HCT116 (cell line): ENCODE measurements at regions of chr4 and their contacts with region 1.

Region 1: GRCh38 chr4:139015269-139015947 is at the start of gene NOCT:
- DNase-seq: peak; percentile 82
- ATAC-seq: peak; percentile 87
- H3K4me3 ChIP-seq: peak within 1 kb of the TSS; percentile 88 to 93
- H3K27ac ChIP-seq: peak within 1 kb of the TSS; percentile 82
- H3K4me1 ChIP-seq: peaks cover 20 to 49% of the 10 kb centered on the region in 2 experiments
- H3K27me3 ChIP-seq: no peaks in the 10 kb centered on the region
- CTCF ChIP-seq: no peak
- POLR2A ChIP-seq: peak; percentile 91
- RAD21 ChIP-seq: no peak
- total RNA-seq, gene NOCT: 20.4 TPM

Region 2: GRCh38 chr4:139223682-139224317 is 208.4 kb after region 1 on chr4:
- CTCF ChIA-PET with region 1: no interaction called
- POLR2A ChIA-PET with region 1: no interaction called
- RAD21 ChIA-PET with region 1: no interaction called
- intact Hi-C with region 1: no loop called
- DNase-seq: no peak
- ATAC-seq: no peak
- H3K4me3 ChIP-seq: no peak overlapping the region
- H3K27ac ChIP-seq: no peak overlapping the region
- H3K4me1 ChIP-seq: peaks cover 0 to 6% of the 10 kb centered on the region in 2 experiments; a peak in 2 of 4 replicates
- H3K27me3 ChIP-seq: no peaks in the 10 kb centered on the region
- CTCF ChIP-seq: no peak
- POLR2A ChIP-seq: no peak
- RAD21 ChIP-seq: no peak

Region 3: DNA sequence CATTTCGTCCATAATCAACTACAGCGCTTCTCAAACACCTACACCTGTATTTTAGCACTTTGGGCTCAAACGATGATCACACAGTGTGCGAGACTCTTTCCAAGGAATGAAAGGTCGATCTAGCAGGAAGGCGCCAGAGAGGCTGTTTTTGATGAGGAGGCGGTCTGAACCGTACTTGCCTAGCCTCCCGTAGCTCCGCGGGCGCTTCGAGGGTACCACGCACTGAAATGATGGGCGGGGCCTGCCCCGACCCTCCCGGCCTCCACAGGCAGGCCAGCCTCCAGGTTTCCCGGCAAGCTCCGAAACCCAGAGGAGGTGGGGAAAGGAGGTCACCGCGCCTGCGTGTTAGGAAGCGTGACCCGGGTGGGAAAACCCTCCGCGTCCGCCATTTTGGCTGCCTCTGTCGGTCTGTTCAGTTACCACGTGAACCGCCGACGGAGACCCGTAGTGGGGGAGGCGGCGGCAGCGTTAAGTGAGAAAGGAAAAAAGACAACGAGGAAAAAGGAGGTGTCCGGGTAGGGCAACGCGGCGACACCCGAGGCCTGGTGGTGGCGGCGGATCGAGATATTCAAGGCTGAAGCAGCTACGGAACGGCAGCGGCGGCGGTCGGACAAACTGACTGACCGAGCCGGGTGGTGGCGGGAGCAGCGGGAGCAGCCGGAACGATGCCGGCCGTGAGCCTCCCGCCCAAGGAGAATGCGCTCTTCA is 285.9 kb after region 1 on chr4 and contains the start of gene NAA15:
- CTCF ChIA-PET with region 1: no interaction called
- POLR2A ChIA-PET with region 1: interaction called, 3 read pairs
- RAD21 ChIA-PET with region 1: no interaction called
- intact Hi-C with region 1: loop called (anchors 5 kb)
- DNase-seq: peak; percentile 97
- ATAC-seq: peak; percentile 94
- H3K4me3 ChIP-seq: peak within 1 kb of the TSS; percentile 70 to 94
- H3K27ac ChIP-seq: peak within 1 kb of the TSS; percentile 70
- H3K4me1 ChIP-seq: peaks cover 18 to 30% of the 10 kb centered on the region in 2 experiments
- H3K27me3 ChIP-seq: no peaks in the 10 kb centered on the region
- CTCF ChIP-seq: no peak
- POLR2A ChIP-seq: peak; percentile 93
- RAD21 ChIP-seq: no peak
- total RNA-seq, gene NAA15: 79.7 TPM